ENCODE measurements at regions of chr1 and their contacts with region 1.

Region 1: GRCh38 chr1:219660666-219661463 is 48.0 kb upstream of the ZC3H11B start:
- DNase-seq: peak; percentile 76 to 91 (median 78)
- ATAC-seq: peak; percentile 98
- H3K4me3 ChIP-seq: no peak overlapping the region
- H3K27ac ChIP-seq: no peak overlapping the region
- H3K4me1 ChIP-seq: peaks cover 0 to 7% of the 10 kb centered on the region in 2 experiments; a peak in 4 of 5 replicates
- H3K27me3 ChIP-seq: no peaks in the 10 kb centered on the region
- CTCF ChIP-seq: peak; percentile 95 to 96 (median 95)
- EP300 ChIP-seq: no peak
- POLR2A ChIP-seq: no peak
- RAD21 ChIP-seq: peak; percentile 88 to 94

Region 2: GRCh38 chr1:218259800-218260199 is 1401.1 kb before region 1 on chr1:
- CTCF ChIA-PET with region 1: no interaction called
- POLR2A ChIA-PET with region 1: no interaction called
- in situ Hi-C with region 1: no loop called
- intact Hi-C with region 1: loop called (anchors 5 kb)
- DNase-seq: peak; percentile 33 to 69 (median 51)
- ATAC-seq: peak; percentile 96
- H3K4me3 ChIP-seq: no peak overlapping the region
- H3K27ac ChIP-seq: no peak overlapping the region
- H3K4me1 ChIP-seq: no peaks in the 10 kb centered on the region
- H3K27me3 ChIP-seq: peaks cover 0 to 3% of the 10 kb centered on the region in 2 experiments; a peak in 1 of 5 replicates
- CTCF ChIP-seq: peak; percentile 62 to 72 (median 68)
- EP300 ChIP-seq: no peak
- POLR2A ChIP-seq: no peak
- RAD21 ChIP-seq: peak; percentile 15 to 71; a peak in 3 of 4 replicates

Region 3: GRCh38 chr1:219209578-219209977 is 451.3 kb before region 1 on chr1:
- CTCF ChIA-PET with region 1: no interaction called
- POLR2A ChIA-PET with region 1: no interaction called
- in situ Hi-C with region 1: no loop called
- intact Hi-C with region 1: loop called (anchors 10 kb)
- DNase-seq: no peak
- ATAC-seq: no peak
- H3K4me3 ChIP-seq: no peak overlapping the region
- H3K27ac ChIP-seq: no peak overlapping the region
- H3K4me1 ChIP-seq: no peaks in the 10 kb centered on the region
- H3K27me3 ChIP-seq: no peaks in the 10 kb centered on the region
- CTCF ChIP-seq: no peak
- EP300 ChIP-seq: no peak
- POLR2A ChIP-seq: no peak
- RAD21 ChIP-seq: no peak

Region 4: DNA sequence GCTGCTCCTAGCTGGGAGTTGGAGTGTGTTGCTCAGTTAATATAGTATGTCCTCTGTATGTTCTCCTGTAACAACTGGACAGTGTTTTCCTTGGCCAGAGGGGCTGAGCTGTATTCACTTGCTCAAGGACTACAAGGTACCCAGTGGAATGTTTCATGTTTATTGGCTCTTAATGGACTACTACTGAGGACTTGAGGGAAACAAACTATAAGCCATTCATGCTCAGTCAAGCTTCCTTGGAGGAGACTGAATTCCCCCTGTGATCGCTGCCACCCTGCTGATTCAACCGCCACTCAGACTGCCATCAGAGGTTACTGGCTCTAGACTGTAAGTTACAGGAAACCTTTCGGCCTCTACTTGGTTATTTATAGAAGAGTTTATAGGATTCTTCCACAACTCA is 214.6 kb before region 1 on chr1:
- CTCF ChIA-PET with region 1: no interaction called
- POLR2A ChIA-PET with region 1: no interaction called
- in situ Hi-C with region 1: no loop called
- intact Hi-C with region 1: no loop called
- DNase-seq: no peak
- ATAC-seq: no peak
- H3K4me3 ChIP-seq: no peak overlapping the region
- H3K27ac ChIP-seq: no peak overlapping the region
- H3K4me1 ChIP-seq: no peaks in the 10 kb centered on the region
- H3K27me3 ChIP-seq: no peaks in the 10 kb centered on the region
- CTCF ChIP-seq: no peak
- EP300 ChIP-seq: no peak
- POLR2A ChIP-seq: no peak
- RAD21 ChIP-seq: no peak

Region 5: GRCh38 chr1:219724440-219724839 is 63.6 kb after region 1 on chr1:
- CTCF ChIA-PET with region 1: no interaction called
- POLR2A ChIA-PET with region 1: no interaction called
- in situ Hi-C with region 1: no loop called
- intact Hi-C with region 1: loop called (anchors 1 kb)
- DNase-seq: peak in 2 of 4 experiments; percentile 45 to 47
- ATAC-seq: peak; percentile 98
- H3K4me3 ChIP-seq: no peak overlapping the region
- H3K27ac ChIP-seq: no peak overlapping the region
- H3K4me1 ChIP-seq: no peaks in the 10 kb centered on the region
- H3K27me3 ChIP-seq: no peaks in the 10 kb centered on the region
- CTCF ChIP-seq: peak; percentile 36 to 63 (median 62)
- EP300 ChIP-seq: no peak
- POLR2A ChIP-seq: no peak
- RAD21 ChIP-seq: peak; percentile 50 to 65